ENCODE measurements at regions of chr17 and their contacts with region 1.

Region 1: DNA sequence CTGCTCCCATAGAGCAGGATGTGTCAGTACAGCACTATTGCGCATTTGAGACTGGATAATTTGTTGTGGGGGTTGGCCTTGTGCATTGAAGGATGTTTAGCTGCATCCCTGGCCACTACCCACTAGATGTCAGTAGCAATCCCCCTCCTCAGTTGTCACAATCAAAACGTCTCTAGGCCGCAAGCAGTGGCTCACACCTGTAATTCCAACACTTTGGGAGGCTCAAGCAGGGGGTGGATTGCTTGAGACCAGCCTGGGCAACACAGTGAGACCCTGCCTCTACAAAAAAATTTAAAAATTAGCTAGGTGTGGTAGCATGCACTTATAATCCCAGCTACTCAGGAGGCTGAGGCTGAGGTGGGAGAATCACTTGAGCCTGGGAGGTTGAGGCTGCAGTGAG is 48.4 kb downstream of the CENPV start:
- DNase-seq: no peak
- H3K4me3 ChIP-seq: no peak overlapping the region
- CTCF ChIP-seq: peak; percentile 65

Region 2: DNA sequence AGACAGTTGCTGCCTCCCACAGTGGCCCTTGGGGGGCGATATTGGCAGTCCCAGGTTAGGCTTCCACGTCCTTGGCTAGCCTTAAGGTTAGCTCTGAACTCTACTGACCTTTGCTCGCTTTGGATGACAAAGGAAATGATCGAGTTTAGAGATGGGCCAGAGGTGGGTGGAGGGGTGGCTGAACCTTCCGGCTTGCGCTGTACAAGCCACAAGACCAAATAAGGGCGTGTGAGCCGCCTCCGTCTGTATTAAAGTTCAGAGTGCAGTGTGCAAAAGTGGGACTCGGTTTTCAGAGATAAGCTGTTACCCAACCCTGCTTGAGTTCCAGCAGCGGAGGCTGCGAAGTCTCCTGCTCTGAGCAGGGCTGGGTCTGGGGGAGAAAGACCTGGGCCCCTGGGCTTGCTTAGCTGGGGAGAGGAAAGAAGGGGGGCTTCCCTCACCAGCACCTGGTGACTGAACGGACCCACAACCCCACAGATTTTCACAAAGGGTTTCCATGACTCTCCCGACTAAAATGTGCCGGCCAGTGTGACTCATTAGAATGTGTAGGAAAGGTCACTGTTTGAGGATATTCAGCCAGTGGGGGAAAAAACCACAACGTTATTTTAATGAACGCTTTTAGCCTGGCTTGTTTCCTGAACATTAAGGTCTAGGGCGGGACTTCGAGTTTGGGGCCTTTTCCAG is 18.7 kb before region 1 on chr17:
- CTCF ChIA-PET with region 1: interaction called, 16 read pairs
- POLR2A ChIA-PET with region 1: interaction called, 3 read pairs
- DNase-seq: peak; percentile 88
- H3K4me3 ChIP-seq: peak overlapping the region; percentile 51
- CTCF ChIP-seq: peak; percentile 42

Region 3: GRCh38 chr17:16293931-16294330 is 10.9 kb before region 1 on chr17:
- CTCF ChIA-PET with region 1: interaction called, 19 read pairs
- POLR2A ChIA-PET with region 1: no interaction called
- DNase-seq: no peak
- H3K4me3 ChIP-seq: no peak overlapping the region
- CTCF ChIP-seq: no peak

Region 4: GRCh38 chr17:16380640-16381495 is 76.0 kb after region 1 on chr17 and contains the start of gene UBB:
- CTCF ChIA-PET with region 1: no interaction called
- POLR2A ChIA-PET with region 1: no interaction called
- DNase-seq: peak; percentile 95
- H3K4me3 ChIP-seq: peak within 1 kb of the TSS; percentile 86
- CTCF ChIP-seq: peak; percentile 8